ENCODE measurements at regions of chr9 and their contacts with region 1.

Region 1: GRCh38 chr9:88722753-88723152 is 187.8 kb downstream of the NXNL2 start:
- DNase-seq: peak; percentile 15
- ATAC-seq: no peak
- H3K4me3 ChIP-seq: no peak overlapping the region
- H3K4me3 Mint-ChIP-seq: no peak overlapping the region
- H3K27ac ChIP-seq: no peak overlapping the region
- H3K27ac Mint-ChIP-seq: no peak overlapping the region
- H3K4me1 ChIP-seq: no peaks in the 10 kb centered on the region
- H3K4me1 Mint-ChIP-seq: no peaks in the 10 kb centered on the region
- H3K27me3 ChIP-seq: peaks cover 0 to 4% (median 0%) of the 10 kb centered on the region in 4 experiments
- H3K27me3 Mint-ChIP-seq: peaks cover 4% of the 10 kb centered on the region
- CTCF ChIP-seq: peak; percentile 31

Region 2: GRCh38 chr9:89000973-89001916 is 278.5 kb after region 1 on chr9:
- CTCF ChIA-PET with region 1: no interaction called
- POLR2A ChIA-PET with region 1: no interaction called
- intact Hi-C with region 1: loop called (anchors 2 kb)
- DNase-seq: peak; percentile 76
- ATAC-seq: peak; percentile 28
- H3K4me3 ChIP-seq: no peak overlapping the region
- H3K4me3 Mint-ChIP-seq: no peak overlapping the region
- H3K27ac ChIP-seq: no peak overlapping the region
- H3K27ac Mint-ChIP-seq: no peak overlapping the region
- H3K4me1 ChIP-seq: peaks cover 3 to 7% of the 10 kb centered on the region in 2 donors
- H3K4me1 Mint-ChIP-seq: peaks cover 3% of the 10 kb centered on the region
- H3K27me3 ChIP-seq: peaks cover 0 to 6% (median 1%) of the 10 kb centered on the region in 4 experiments
- H3K27me3 Mint-ChIP-seq: peaks cover 17% of the 10 kb centered on the region
- CTCF ChIP-seq: peak; percentile 67

Region 3: DNA sequence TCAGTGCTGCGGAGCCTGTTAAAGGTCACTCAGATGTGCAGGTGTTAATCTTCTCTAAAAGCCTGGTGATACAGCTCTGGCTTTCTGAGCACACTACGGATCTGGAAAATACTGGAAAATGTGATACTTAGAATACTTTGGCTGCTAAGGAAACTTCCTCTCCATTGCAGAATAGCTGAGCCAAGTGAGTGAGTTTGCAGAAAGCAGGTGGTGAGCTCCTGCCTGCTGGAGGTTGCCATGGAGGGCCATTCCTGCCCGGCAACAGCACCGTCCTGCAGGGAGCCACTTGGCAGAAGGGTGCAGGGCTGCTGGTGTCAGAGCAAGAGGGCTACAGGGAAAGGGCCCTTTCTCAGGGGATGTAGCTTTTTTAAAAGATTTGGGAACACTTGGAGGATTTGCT is 636.2 kb after region 1 on chr9:
- CTCF ChIA-PET with region 1: no interaction called
- POLR2A ChIA-PET with region 1: no interaction called
- intact Hi-C with region 1: no loop called
- DNase-seq: no peak
- ATAC-seq: no peak
- H3K4me3 ChIP-seq: no peak overlapping the region
- H3K4me3 Mint-ChIP-seq: no peak overlapping the region
- H3K27ac ChIP-seq: no peak overlapping the region
- H3K27ac Mint-ChIP-seq: no peak overlapping the region
- H3K4me1 ChIP-seq: no peaks in the 10 kb centered on the region
- H3K4me1 Mint-ChIP-seq: no peaks in the 10 kb centered on the region
- H3K27me3 ChIP-seq: no peaks in the 10 kb centered on the region
- H3K27me3 Mint-ChIP-seq: no peaks in the 10 kb centered on the region
- CTCF ChIP-seq: no peak

Measured in B cell (primary cell).